Prostate gland (tissue), 2 donors: ENCODE measurements at regions of chrX and their contacts with region 1.

Region 1: GRCh38 chrX:152817078-152817764 is 13.3 kb downstream of the CETN2 start:
- DNase-seq: no peak
- H3K4me3 ChIP-seq: no peak overlapping the region
- H3K27ac ChIP-seq: no peak overlapping the region
- H3K4me1 ChIP-seq: no peaks in the 10 kb centered on the region
- H3K27me3 ChIP-seq: no peaks in the 10 kb centered on the region
- CTCF ChIP-seq: peak in 1 of 4 experiments; percentile 21
- POLR2A ChIP-seq: no peak

Region 2: DNA sequence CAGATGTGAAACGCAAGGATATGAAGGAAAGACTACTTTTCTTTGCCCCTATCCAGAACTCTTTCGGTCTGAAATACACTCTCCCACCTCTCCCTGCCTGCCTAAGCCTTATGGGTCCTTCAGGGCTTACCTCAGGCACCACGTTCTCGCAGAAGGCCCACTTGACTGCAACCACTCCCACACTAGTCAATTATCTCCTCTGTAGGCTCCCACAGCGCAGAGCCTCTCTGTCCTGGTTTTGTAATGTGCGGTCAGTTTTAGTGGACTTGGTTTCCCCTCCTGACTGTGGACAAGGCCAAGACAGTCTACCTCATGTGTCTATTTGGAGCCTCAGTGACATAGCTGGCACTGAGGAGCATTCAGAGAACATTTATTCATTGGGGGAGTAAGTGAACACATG is 1071.6 kb before region 1 on chrX:
- intact Hi-C with region 1: loop called (anchors 10 kb)
- DNase-seq: no peak
- H3K4me3 ChIP-seq: no peak overlapping the region
- H3K27ac ChIP-seq: no peak overlapping the region
- H3K4me1 ChIP-seq: no peaks in the 10 kb centered on the region
- H3K27me3 ChIP-seq: no peaks in the 10 kb centered on the region
- CTCF ChIP-seq: no peak
- POLR2A ChIP-seq: no peak